Caco-2 (cell line): ENCODE measurements at regions of chr20 and their contacts with region 1.

Region 1: GRCh38 chr20:21048841-21049273 is 57.3 kb downstream of the LINC00237 start:
- DNase-seq: peak in 1 of 2 experiments; percentile 71
- H3K4me3 ChIP-seq: no peak overlapping the region
- H3K4me3 Mint-ChIP-seq: no peak overlapping the region
- H3K27ac Mint-ChIP-seq: no peak overlapping the region
- H3K4me1 ChIP-seq: peaks cover 32% of the 10 kb centered on the region
- H3K4me1 Mint-ChIP-seq: peaks cover 27% of the 10 kb centered on the region
- H3K27me3 ChIP-seq: no peaks in the 10 kb centered on the region
- H3K27me3 Mint-ChIP-seq: no peaks in the 10 kb centered on the region
- CTCF ChIP-seq: peak; percentile 60 to 76

Region 2: GRCh38 chr20:21077809-21078345 is 29.0 kb after region 1 on chr20:
- CTCF ChIA-PET with region 1: no interaction called
- POLR2A ChIA-PET with region 1: no interaction called
- intact Hi-C with region 1: loop called (anchors 1 kb)
- DNase-seq: peak; percentile 49 to 72
- H3K4me3 ChIP-seq: no peak overlapping the region
- H3K4me3 Mint-ChIP-seq: peak overlapping the region; percentile 31
- H3K27ac Mint-ChIP-seq: peak overlapping the region; percentile 14
- H3K4me1 ChIP-seq: peaks cover 24% of the 10 kb centered on the region
- H3K4me1 Mint-ChIP-seq: peaks cover 21% of the 10 kb centered on the region
- H3K27me3 ChIP-seq: no peaks in the 10 kb centered on the region
- H3K27me3 Mint-ChIP-seq: no peaks in the 10 kb centered on the region
- CTCF ChIP-seq: no peak

Region 3: DNA sequence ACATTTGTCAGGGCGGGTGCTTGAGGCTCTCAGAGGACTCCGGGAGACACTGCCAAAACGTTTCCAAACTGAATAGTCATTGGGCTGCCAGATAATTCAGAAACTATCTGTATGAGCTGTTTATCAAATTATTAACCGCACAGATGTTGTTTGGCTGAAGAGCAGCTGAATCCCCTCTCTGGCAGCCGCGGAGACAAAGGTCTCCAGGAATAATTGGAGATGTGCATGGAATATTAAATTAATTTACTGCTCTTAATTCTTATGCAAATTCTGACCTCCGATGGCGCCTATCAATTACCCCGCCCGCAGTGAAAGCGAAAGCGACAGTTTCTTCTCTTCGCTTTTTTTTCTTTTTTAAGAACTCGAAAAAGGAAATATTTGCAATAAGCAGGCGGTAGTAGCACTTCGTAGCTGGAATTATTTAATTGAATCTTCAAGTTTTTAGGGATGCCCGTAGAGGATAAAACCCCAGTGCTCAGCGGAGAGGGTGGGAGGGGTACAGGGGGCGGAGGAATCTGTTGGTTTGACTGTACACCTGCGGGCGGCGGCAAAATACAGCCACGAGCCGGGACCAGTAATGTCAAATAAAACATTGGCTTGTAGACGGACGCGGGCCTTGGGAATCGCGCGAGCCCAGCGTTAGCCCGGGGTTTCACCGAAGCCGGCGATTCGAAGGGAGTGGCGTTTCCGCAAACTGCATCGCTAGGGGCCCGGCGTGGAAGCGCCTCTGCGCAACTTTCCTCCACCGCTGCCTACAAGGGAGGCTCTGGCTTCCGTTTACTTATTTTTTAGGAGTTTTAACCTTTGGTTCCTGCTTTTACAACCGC is 51.1 kb after region 1 on chr20:
- CTCF ChIA-PET with region 1: interaction called, 16 read pairs
- POLR2A ChIA-PET with region 1: interaction called, 4 read pairs
- intact Hi-C with region 1: loop called (anchors 1 kb)
- DNase-seq: peak; percentile 78 to 83
- H3K4me3 ChIP-seq: peak overlapping the region; percentile 56
- H3K4me3 Mint-ChIP-seq: peak overlapping the region; percentile 97
- H3K27ac Mint-ChIP-seq: peak overlapping the region; percentile 100
- H3K4me1 ChIP-seq: no peaks in the 10 kb centered on the region; the same call in 1 of the 2 replicates
- H3K4me1 Mint-ChIP-seq: peaks cover 6% of the 10 kb centered on the region
- H3K27me3 ChIP-seq: no peaks in the 10 kb centered on the region
- H3K27me3 Mint-ChIP-seq: peaks cover 4% of the 10 kb centered on the region
- CTCF ChIP-seq: no peak

Region 4: GRCh38 chr20:21125849-21126580 is 77.2 kb after region 1 on chr20 and contains the start of gene KIZ:
- CTCF ChIA-PET with region 1: no interaction called
- POLR2A ChIA-PET with region 1: no interaction called
- intact Hi-C with region 1: loop called (anchors 1 kb)
- DNase-seq: peak; percentile 97 to 100
- H3K4me3 ChIP-seq: peak within 1 kb of the TSS; percentile 97
- H3K4me3 Mint-ChIP-seq: peak within 1 kb of the TSS; percentile 84
- H3K27ac Mint-ChIP-seq: peak within 1 kb of the TSS; percentile 61
- H3K4me1 ChIP-seq: no peaks in the 10 kb centered on the region
- H3K4me1 Mint-ChIP-seq: peaks cover 9% of the 10 kb centered on the region
- H3K27me3 ChIP-seq: no peaks in the 10 kb centered on the region
- H3K27me3 Mint-ChIP-seq: no peaks in the 10 kb centered on the region
- CTCF ChIP-seq: peak; percentile 10 to 38
- total RNA-seq, gene KIZ: 21.0 and 31.8 TPM in 2 replicates

Region 5: DNA sequence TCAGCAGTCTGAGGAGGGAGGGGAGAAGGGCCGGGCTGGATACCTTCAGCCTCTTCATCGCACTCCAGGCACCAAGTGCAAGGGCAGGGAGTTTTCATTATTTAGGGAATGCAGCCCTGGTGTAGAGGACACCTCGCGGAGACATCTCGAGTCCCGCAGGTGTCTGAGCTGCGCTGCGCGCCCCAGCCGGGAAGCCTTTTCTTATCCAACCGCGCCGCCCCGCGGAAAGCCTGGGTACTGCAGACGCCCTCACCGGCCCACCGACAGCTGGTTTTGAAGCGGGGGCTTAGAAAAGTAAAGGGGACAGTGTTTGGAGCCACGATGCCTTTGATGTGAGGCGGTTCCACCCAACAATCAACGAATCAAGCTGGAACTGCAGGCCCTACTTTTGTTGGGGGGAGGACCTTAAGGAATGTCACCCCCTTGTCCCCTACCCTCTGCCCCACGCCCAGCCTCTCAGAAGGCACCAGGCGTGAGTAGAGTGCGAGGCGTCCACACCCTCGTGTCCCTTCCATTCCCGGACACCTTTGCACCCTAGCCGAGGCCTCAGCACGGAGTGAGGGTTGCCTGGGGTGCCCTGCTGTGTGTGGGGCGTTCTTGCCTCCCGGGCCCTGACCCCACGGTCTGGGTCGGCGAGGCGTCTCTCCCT is 456.4 kb after region 1 on chr20:
- CTCF ChIA-PET with region 1: no interaction called
- POLR2A ChIA-PET with region 1: no interaction called
- intact Hi-C with region 1: loop called (anchors 5 kb)
- DNase-seq: peak; percentile 74 to 89
- H3K4me3 ChIP-seq: peak overlapping the region; percentile 62
- H3K4me3 Mint-ChIP-seq: peak overlapping the region; percentile 47
- H3K27ac Mint-ChIP-seq: no peak overlapping the region
- H3K4me1 ChIP-seq: peaks cover 13% of the 10 kb centered on the region
- H3K4me1 Mint-ChIP-seq: no peaks in the 10 kb centered on the region
- H3K27me3 ChIP-seq: no peaks in the 10 kb centered on the region
- H3K27me3 Mint-ChIP-seq: peaks cover 3% of the 10 kb centered on the region
- CTCF ChIP-seq: peak; percentile 98 to 99